Activated T-helper 1 cell treated with anti-CD3 and anti-CD28 coated beads, Interleukin-12 subunit alpha, Interleukin-12 subunit beta, Interleukin-2, Interleukin-4 antibody, amounts not matched to agents 30 ng/mL and 10 ng/mL and 1 ng/mL, durations not matched to agents 14 hours and 24 hours and 36 hours (primary cell): ENCODE measurements at regions of chr15 and their contacts with region 1.

Region 1: DNA sequence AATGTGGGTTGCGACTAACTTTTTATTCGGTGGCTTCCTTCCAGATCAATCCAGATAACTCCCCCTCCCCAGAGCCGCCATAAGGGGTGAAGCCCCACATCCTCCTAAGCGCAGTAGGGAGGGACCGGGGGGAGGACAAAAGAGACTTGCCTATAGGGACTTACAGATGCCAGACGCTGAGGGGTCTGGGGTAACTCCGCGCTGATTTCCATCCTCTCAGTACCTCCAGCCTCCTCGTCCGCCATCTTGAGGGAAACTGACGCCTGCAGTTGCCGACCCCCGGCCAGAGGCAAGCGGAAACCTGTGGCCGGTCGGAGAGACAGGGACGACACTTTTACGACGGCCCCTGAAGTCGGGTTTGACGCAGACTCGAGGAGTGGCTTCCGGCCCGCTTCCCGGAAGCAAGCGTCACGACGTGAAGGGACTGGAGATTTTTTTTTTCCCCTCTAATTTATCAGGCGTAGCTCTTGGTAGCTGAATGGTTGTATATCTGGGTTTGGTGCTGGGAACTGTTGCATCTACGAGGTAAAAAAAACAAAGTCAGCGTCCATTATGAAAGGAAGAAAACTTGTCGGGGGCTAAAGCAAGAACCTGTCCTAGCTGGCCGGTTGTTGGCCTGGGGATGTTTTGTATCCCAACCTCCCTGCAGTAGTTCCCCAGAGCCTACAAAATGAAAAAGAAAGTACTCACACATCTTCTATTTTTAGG is at the start of gene UBR1:
- DNase-seq: peak; percentile 87
- H3K4me3 Mint-ChIP-seq: peak within 1 kb of the TSS; percentile 90
- H3K27ac Mint-ChIP-seq: peak within 1 kb of the TSS; percentile 92
- H3K4me1 Mint-ChIP-seq: peaks cover 45% of the 10 kb centered on the region
- H3K27me3 Mint-ChIP-seq: no peaks in the 10 kb centered on the region
- total RNA-seq, gene UBR1: 29.1 and 35.3 TPM in 2 replicates

Region 2: GRCh38 chr15:43127752-43128151 is 21.8 kb after region 1 on chr15:
- intact Hi-C with region 1: loop called (anchors 1 kb)
- DNase-seq: no peak
- H3K4me3 Mint-ChIP-seq: no peak overlapping the region
- H3K27ac Mint-ChIP-seq: no peak overlapping the region
- H3K4me1 Mint-ChIP-seq: peaks cover 29% of the 10 kb centered on the region
- H3K27me3 Mint-ChIP-seq: peaks cover 14% of the 10 kb centered on the region

Region 3: GRCh38 chr15:43133430-43134156 is 27.7 kb after region 1 on chr15 and contains the start of gene TMEM62:
- intact Hi-C with region 1: loop called (anchors 1 kb)
- DNase-seq: peak; percentile 67
- H3K4me3 Mint-ChIP-seq: peak within 1 kb of the TSS; percentile 96
- H3K27ac Mint-ChIP-seq: peak within 1 kb of the TSS; percentile 90
- H3K4me1 Mint-ChIP-seq: peaks cover 33% of the 10 kb centered on the region
- H3K27me3 Mint-ChIP-seq: peaks cover 9% of the 10 kb centered on the region
- total RNA-seq, gene TMEM62: 16.4 and 18.6 TPM in 2 replicates

Region 4: DNA sequence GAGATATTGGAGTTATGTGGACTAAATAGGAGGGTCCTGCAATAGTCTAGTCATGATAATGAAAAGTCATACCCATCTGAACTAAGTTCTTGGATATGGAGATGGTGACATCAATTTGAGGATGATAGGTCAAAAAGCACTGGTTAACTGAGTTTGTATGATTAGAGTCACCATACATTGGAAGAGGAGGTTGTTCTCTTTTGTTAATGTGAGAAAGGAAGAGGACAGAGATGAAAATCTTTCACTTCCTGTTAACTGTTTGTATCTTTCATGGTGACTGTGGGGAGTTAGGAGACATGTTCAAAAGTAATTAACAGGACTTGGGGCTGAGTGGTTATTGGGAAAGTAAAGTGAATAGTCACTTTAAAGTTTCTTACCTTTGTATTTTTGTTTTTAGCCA is 38.6 kb after region 1 on chr15:
- intact Hi-C with region 1: loop called (anchors 2 kb)
- DNase-seq: no peak
- H3K4me3 Mint-ChIP-seq: no peak overlapping the region
- H3K27ac Mint-ChIP-seq: no peak overlapping the region
- H3K4me1 Mint-ChIP-seq: peaks cover 21% of the 10 kb centered on the region
- H3K27me3 Mint-ChIP-seq: no peaks in the 10 kb centered on the region

Region 5: DNA sequence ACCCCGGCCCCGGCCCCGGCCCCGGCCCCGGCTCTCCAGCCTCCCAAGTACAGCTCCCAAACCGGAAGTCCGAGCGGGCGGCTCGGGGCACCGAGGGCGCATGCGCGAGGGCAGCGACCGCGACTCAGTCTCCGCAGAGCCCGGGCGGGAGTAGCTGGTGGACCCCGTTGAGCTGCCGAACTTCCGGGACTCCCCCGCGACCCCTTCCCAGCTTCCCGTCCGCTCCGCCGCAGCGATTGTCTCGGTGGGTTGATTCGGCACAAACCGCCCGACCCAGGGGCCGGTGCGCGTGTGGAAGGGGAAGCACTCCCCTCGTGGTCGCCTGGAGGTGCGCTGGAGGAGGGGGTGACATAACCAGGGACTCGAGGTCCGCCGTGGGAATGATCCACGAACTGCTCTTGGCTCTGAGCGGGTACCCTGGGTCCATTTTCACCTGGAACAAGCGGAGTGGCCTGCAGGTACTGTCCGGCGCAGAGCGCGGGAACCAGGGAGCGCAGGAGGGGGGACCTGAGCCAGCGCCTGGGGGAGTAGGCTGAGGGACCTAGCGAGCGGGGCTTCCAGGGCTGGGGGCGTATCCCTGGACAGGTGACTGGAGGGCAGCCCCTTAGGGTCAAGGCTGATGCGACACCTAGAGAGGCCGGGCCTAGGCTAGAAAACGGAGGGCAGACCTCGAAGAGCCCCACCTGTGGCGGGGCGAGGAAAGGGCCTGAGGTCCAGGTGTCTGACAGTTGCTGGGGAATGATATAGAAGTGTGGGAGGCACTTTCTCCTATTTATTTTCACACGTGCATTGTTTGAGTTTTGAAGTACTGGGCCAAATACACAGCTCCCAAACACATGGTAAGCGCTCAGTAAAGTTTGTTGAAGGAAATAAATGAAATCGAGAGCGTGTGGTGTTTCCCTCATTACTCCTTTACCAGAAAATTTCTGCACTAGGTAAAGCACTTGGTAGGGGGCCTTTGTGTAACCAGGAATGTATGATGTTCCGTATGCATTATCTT is 265.3 kb after region 1 on chr15 and contains the starts of genes TUBGCP4 and ZSCAN29:
- intact Hi-C with region 1: loop called (anchors 5 kb)
- DNase-seq: peak; percentile 77
- H3K4me3 Mint-ChIP-seq: peak within 1 kb of the TSS; percentile 92
- H3K27ac Mint-ChIP-seq: peak within 1 kb of the TSS; percentile 83
- H3K4me1 Mint-ChIP-seq: peaks cover 54% of the 10 kb centered on the region
- H3K27me3 Mint-ChIP-seq: no peaks in the 10 kb centered on the region
- total RNA-seq, gene TUBGCP4: 46.5 and 47.2 TPM in 2 replicates
- total RNA-seq, gene ZSCAN29: 32.9 and 34.9 TPM in 2 replicates